Natural killer cell (primary cell): ENCODE measurements at regions of chr2 and their contacts with region 1.

Region 1: GRCh38 chr2:96806468-96807126 is 9.5 kb upstream of the CNNM3 start:
- DNase-seq: peak; percentile 53 to 65
- ATAC-seq: peak; percentile 87 to 92 (median 88)
- H3K4me3 ChIP-seq: peak overlapping the region; percentile 13
- H3K4me3 Mint-ChIP-seq: peak overlapping the region; percentile 90
- H3K27ac ChIP-seq: peak overlapping the region; percentile 83
- H3K27ac Mint-ChIP-seq: peak overlapping the region; percentile 94 to 98
- H3K4me1 ChIP-seq: peaks cover 25% of the 10 kb centered on the region
- H3K4me1 Mint-ChIP-seq: peaks cover 12 to 23% of the 10 kb centered on the region in 2 donors
- H3K27me3 ChIP-seq: no peaks in the 10 kb centered on the region
- H3K27me3 Mint-ChIP-seq: no peaks in the 10 kb centered on the region
- CTCF ChIP-seq: no peak

Region 2: DNA sequence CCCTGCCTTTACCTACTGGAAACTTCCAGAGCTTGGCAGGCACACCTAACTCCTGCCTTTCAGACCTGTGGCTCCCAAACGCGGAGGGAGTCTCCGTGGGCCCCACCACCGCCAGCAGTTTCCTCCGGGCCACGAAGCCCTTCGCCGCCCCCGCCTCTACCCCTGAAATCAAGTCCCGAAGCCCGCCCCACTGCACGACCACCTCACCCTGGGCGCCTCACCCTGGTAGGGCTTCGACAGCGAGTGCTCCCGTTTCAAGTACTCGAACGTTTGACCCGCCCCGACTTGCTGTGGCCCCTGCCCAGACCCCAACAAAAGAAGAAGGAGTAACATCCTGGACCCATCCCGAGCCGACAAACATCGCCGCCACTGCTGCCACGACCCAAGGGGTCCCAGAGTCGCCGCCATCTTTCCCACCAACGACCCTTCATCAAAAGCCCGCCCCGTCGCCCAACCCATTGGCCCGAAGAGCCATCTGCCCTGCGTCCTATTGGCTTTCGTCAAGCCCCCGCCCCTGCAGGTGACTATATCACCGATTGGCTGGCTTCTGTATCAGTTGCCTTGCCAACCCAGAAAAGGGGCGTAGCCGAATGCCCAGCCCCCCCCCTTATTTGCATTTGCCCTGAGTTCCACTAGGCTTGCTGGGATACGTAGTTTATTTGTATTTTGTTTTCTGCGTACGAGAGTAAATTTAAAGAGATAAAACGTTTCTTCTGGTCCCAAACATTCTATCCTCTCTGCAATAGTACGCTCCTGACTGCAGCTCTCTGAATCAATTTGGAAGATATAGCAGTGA is 66.8 kb before region 1 on chr2 and contains the start of gene LMAN2L:
- intact Hi-C with region 1: loop called (anchors 2 kb)
- DNase-seq: peak; percentile 93 to 97
- ATAC-seq: peak; percentile 99 to 100 (median 100)
- H3K4me3 ChIP-seq: peak within 1 kb of the TSS; percentile 73
- H3K4me3 Mint-ChIP-seq: peak within 1 kb of the TSS; percentile 98
- H3K27ac ChIP-seq: peak within 1 kb of the TSS; percentile 57
- H3K27ac Mint-ChIP-seq: peak within 1 kb of the TSS; percentile 83 to 93
- H3K4me1 ChIP-seq: peaks cover 15% of the 10 kb centered on the region
- H3K4me1 Mint-ChIP-seq: peaks cover 18 to 30% of the 10 kb centered on the region in 2 donors
- H3K27me3 ChIP-seq: no peaks in the 10 kb centered on the region
- H3K27me3 Mint-ChIP-seq: no peaks in the 10 kb centered on the region
- CTCF ChIP-seq: no peak
- total RNA-seq, gene LMAN2L: 4.0 to 7.9 (median 5.9) TPM